ENCODE measurements at regions of chr7 and their contacts with region 1.

Region 1: DNA sequence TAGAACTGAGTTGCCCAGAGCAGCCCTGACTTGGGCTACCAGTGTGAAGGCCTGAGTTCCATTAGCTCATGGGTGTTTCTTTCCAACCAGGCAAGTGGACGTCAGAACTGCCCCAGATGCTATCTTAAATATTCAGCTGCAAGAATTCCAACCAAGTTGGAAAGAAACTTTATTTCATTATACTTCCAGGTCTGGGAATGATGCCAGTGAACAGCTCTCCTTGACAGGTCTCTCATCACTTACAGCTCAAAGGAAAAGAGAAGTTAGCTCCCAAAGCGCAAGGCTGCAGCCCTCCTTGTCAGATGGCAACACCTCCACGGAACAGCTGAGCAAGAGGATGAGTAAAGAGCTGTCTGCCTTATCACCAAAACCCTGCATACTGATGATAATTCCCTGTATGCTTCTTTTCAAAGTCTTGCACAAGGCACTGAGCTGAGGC is 255.5 kb upstream of the AOAH start:
- DNase-seq: no peak
- ATAC-seq: peak; percentile 25
- H3K4me3 ChIP-seq: no peak overlapping the region
- H3K27ac ChIP-seq: no peak overlapping the region
- H3K4me1 ChIP-seq: peaks cover 3 to 11% of the 10 kb centered on the region in 2 donors
- H3K27me3 ChIP-seq: no peaks in the 10 kb centered on the region
- CTCF ChIP-seq: no peak

Region 2: GRCh38 chr7:37173670-37174069 is 193.8 kb after region 1 on chr7:
- intact Hi-C with region 1: loop called in 1 of 2 experiments (anchors 10 kb)
- DNase-seq: no peak
- ATAC-seq: no peak
- H3K4me3 ChIP-seq: no peak overlapping the region
- H3K27ac ChIP-seq: no peak overlapping the region
- H3K4me1 ChIP-seq: peaks cover 0 to 6% of the 10 kb centered on the region in 2 donors
- H3K27me3 ChIP-seq: no peaks in the 10 kb centered on the region
- CTCF ChIP-seq: no peak

Measured in left lung (tissue), 14 donors.